Astrocyte of the cerebellum (primary cell): ENCODE measurements at regions of chr18 and their contacts with region 1.

Region 1: GRCh38 chr18:23115683-23116096 is 19.6 kb upstream of the CABLES1 start:
- DNase-seq: peak; percentile 86
- H3K4me3 ChIP-seq: no peak overlapping the region
- CTCF ChIP-seq: no peak

Region 2: DNA sequence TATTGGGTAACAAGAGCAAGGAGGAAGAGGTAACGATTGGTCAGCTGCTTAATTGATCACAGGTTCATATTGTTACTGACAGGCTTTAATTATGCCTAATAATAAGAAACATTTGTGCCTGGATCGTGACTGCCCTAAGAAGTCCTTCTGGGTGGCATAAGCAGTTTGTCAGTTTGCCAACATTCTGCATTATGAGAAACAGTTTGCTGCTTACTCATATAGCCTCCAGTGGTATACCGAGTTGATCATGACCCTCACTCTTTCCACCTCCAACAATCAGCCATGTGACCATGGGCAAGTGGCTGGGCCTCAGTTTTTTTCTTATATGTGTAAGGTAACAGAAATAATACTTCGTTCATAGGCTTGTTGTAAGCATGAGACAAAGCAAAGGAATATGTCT is 77.0 kb before region 1 on chr18:
- in situ Hi-C with region 1: no loop called
- DNase-seq: no peak
- H3K4me3 ChIP-seq: no peak overlapping the region
- CTCF ChIP-seq: no peak

Region 3: DNA sequence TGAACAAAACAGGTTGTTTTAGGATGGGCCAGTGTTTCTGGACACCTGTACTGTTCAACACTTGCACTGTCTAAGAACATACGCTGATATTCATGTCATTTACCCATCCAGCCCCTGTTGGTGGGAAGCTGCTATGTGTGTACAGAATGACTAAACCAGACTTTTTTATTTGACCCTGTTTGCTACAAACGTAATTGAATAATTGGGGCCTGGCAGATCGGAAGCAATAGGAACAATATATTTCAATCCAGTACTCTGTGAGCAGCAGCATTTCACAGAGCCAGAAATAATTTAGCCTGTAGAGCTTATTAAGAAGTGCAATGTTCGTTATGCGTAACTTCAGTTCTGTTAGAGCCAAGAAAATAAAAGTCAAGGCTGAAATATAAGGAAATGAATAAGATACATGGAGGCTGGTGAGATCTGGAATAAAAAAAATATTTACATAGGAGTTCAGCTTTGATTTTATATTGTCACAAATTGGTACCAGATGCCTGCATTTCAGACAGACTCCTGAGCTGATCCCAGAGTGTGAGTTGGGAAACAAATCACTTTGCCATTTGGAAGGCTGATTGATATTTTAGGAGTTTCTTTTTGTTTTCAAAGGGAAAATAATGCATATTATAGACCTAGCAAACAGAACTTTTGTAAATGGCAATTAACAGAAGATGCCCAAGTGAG is 39.3 kb after region 1 on chr18:
- in situ Hi-C with region 1: no loop called
- DNase-seq: no peak
- H3K4me3 ChIP-seq: no peak overlapping the region
- CTCF ChIP-seq: peak; percentile 14

Region 4: GRCh38 chr18:23178661-23179081 is 63.0 kb after region 1 on chr18:
- in situ Hi-C with region 1: loop called (anchors 10 kb)
- DNase-seq: no peak
- H3K4me3 ChIP-seq: no peak overlapping the region
- CTCF ChIP-seq: no peak